Gastrocnemius medialis (tissue), 4 donors: ENCODE measurements at regions of chr1 and their contacts with region 1.

Region 1: GRCh38 chr1:116139592-116140134 is 28.5 kb downstream of the MAB21L3 start:
- DNase-seq: no peak
- ATAC-seq: no peak
- H3K4me3 ChIP-seq: no peak overlapping the region
- H3K27ac ChIP-seq: no peak overlapping the region
- H3K4me1 ChIP-seq: no peaks in the 10 kb centered on the region
- H3K27me3 ChIP-seq: no peaks in the 10 kb centered on the region
- CTCF ChIP-seq: no peak
- POLR2A ChIP-seq: no peak

Region 2: GRCh38 chr1:115882913-115883902 is 256.5 kb before region 1 on chr1:
- in situ Hi-C with region 1: no loop called
- intact Hi-C with region 1: no loop called
- DNase-seq: no peak
- ATAC-seq: no peak
- H3K4me3 ChIP-seq: no peak overlapping the region
- H3K27ac ChIP-seq: no peak overlapping the region
- H3K4me1 ChIP-seq: no peaks in the 10 kb centered on the region
- H3K27me3 ChIP-seq: no peaks in the 10 kb centered on the region
- CTCF ChIP-seq: no peak
- POLR2A ChIP-seq: no peak

Region 3: DNA sequence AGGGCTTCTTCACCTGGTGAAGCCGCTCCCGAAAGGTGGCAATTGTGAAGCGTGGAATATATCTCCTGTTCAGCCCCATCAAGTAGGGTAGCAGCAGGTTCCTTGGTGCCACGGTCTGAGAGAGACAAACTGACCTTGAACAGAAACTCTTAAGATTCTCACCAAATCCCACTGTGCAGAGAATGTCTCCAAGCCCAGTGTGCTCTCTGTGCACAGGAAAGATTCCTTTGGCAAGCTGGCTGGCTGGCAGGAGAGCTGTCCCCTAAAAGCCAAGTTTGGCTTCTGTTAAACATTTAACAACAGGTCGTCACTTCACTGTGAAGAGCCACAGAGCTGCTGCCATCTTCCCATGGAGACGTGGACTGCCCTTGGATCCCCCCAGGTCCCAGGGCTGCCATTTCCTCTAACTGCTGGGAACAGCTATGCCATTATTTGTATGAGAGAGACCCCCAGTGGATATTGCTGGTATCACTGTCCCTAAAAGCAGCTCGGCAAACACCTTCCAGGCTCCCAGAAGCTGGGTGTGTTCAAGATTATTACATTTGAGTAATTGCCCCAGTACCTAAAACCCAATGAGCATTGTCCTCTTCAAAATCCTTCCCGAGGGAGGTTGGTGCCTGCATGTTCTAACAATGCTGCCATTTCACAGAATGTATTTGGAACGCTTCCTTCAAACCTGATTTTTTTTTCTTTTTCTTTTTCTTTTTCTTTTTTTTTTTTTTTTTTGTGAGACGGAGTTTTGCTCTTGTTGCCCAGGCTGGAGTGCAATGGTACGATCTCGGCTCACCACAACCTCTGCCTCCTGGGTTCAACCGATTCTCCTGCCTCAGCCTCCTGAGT is 359.3 kb after region 1 on chr1:
- in situ Hi-C with region 1: loop called in 3 of 4 experiments (anchors 5 to 10 kb)
- intact Hi-C with region 1: loop called (anchors 1 kb)
- DNase-seq: peak in 1 of 2 donors; percentile 34
- ATAC-seq: peak; percentile 57 to 85
- H3K4me3 ChIP-seq: no peak overlapping the region
- H3K27ac ChIP-seq: no peak overlapping the region
- H3K4me1 ChIP-seq: peaks cover 0 to 8% of the 10 kb centered on the region in 2 donors
- H3K27me3 ChIP-seq: no peaks in the 10 kb centered on the region
- CTCF ChIP-seq: peak; percentile 79 to 86 (median 79)
- POLR2A ChIP-seq: no peak